GM10248 (cell line): ENCODE measurements at regions of chr6 and their contacts with region 1.

Region 1: GRCh38 chr6:15623276-15624116 is 39.3 kb downstream of the DTNBP1 start:
- DNase-seq: no peak
- CTCF ChIP-seq: peak; percentile 38

Region 2: DNA sequence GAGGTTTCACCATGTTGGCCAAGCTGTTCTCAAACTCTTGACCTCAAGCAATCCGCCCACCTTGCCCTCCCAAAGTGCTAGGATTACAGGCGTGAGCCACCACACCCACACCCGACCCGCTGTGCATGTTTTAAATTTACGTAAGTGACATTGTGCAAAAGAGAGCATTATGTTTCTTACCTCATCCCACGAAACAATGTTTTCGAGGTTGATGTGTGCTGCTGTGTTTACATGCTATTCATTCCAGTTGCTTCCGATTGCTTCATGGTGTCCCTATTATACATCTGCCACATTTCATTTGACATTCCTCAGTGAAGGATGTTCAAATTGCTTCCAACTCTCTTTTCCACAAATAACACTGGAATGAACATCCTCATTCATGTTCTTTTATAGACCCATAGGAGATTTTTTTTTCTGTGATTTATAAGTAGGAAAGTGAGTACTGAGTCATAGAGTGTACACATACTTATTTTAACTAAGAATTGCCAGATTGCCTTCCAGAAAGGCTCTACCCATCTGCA is 781.5 kb before region 1 on chr6:
- CTCF ChIA-PET with region 1: no interaction called
- POLR2A ChIA-PET with region 1: no interaction called
- DNase-seq: no peak
- CTCF ChIP-seq: no peak

Region 3: GRCh38 chr6:15608396-15608795 is 15.1 kb before region 1 on chr6:
- CTCF ChIA-PET with region 1: interaction called, 40 read pairs
- POLR2A ChIA-PET with region 1: no interaction called
- DNase-seq: no peak
- CTCF ChIP-seq: no peak

Region 4: GRCh38 chr6:15642276-15642675 is 18.8 kb after region 1 on chr6:
- CTCF ChIA-PET with region 1: interaction called, 16 read pairs
- POLR2A ChIA-PET with region 1: no interaction called
- DNase-seq: no peak
- CTCF ChIP-seq: no peak

Region 5: GRCh38 chr6:15653581-15653980 is 30.1 kb after region 1 on chr6:
- CTCF ChIA-PET with region 1: interaction called, 12 read pairs
- POLR2A ChIA-PET with region 1: interaction called, 3 read pairs
- DNase-seq: no peak
- CTCF ChIP-seq: no peak